WTC11 (cell line): ENCODE measurements at regions of chr17 and their contacts with region 1.

Region 1: DNA sequence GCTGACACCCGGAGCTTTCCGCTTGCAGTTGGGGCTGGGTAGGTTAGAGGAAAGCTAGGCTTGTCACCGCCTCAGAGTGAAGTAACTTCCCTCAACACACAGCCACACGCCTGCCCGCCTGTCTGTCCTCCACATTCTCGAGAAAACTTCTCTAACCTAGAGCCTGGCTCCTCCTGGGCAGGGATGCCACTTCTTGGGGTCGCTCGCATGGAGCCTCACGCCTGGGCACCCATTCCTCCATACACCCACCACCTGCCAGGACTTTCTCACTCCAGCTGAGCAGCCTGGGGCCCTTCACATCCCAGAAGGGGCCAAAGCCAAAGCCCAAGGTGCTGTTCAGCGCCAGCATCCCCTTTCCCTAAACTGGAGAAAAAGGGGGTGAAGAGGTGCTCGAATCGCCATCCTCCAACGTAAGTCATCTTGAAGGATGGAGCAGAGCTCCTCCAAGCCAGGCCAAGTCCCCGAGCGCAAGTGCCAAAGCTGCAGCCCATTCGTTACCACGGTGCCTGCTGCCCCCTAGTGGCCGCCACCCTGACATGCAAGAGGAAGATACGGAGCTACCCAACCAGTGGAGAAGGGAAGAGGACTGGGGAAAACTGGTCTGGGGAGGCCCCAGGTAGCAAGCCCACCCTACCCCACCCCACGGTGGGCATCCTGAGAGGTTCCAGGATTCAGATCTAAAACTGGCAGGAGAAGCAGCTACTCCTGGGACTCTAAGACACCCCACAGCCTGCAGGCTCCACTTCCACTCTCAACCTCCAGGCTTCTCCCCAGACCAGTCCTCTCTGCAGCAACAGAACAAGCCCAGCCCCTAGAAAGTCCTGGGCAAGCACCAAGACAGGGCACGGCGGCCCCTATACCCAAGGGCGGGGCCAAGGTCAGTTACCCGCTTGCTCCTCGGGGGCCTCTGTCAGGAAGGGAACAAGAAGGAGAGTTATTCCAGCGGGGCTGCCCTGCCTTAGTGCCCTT is 63.1 kb downstream of the MYO18A start:
- DNase-seq: peak; percentile 93
- ATAC-seq: peak; percentile 72
- H3K4me3 Mint-ChIP-seq: no peak overlapping the region
- H3K27ac Mint-ChIP-seq: no peak overlapping the region
- H3K4me1 Mint-ChIP-seq: peaks cover 9% of the 10 kb centered on the region
- H3K27me3 Mint-ChIP-seq: no peaks in the 10 kb centered on the region
- CTCF ChIP-seq: peak; percentile 98

Region 2: GRCh38 chr17:28916302-28916934 is 200.7 kb before region 1 on chr17:
- CTCF ChIA-PET with region 1: interaction called, 15 read pairs
- POLR2A ChIA-PET with region 1: no interaction called
- DNase-seq: peak; percentile 53
- ATAC-seq: peak; percentile 88
- H3K4me3 Mint-ChIP-seq: no peak overlapping the region
- H3K27ac Mint-ChIP-seq: no peak overlapping the region
- H3K4me1 Mint-ChIP-seq: no peaks in the 10 kb centered on the region
- H3K27me3 Mint-ChIP-seq: no peaks in the 10 kb centered on the region
- CTCF ChIP-seq: peak; percentile 62

Region 3: GRCh38 chr17:28973425-28973824 is 143.7 kb before region 1 on chr17:
- CTCF ChIA-PET with region 1: interaction called, 78 read pairs
- POLR2A ChIA-PET with region 1: no interaction called
- DNase-seq: no peak
- ATAC-seq: no peak
- H3K4me3 Mint-ChIP-seq: no peak overlapping the region
- H3K27ac Mint-ChIP-seq: no peak overlapping the region
- H3K4me1 Mint-ChIP-seq: peaks cover 33% of the 10 kb centered on the region
- H3K27me3 Mint-ChIP-seq: peaks cover 3% of the 10 kb centered on the region; the same call in 1 of the 2 replicates
- CTCF ChIP-seq: no peak

Region 4: DNA sequence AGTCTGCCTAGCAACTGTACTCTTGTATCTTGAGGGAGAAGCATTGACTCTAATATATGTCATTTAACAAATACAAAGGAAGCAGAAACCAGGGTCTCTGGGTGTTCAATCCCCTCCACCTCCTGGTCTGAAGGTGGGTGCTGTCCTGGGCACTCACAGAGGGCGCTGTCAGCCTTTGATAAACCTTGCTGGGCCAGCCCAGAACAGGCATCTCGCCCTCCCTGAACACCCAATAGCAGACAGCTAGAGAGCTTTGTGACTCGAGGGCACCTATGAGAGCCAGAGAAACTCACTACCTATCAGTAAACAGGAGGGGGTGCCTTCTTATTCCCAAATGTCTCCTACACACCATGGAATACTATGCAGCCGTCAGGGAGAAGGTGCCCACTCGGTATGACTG is 80.5 kb before region 1 on chr17:
- CTCF ChIA-PET with region 1: interaction called, 42 read pairs
- POLR2A ChIA-PET with region 1: interaction called, 3 read pairs
- DNase-seq: no peak
- ATAC-seq: 0 out of 2 replicates have a peak, but pooled peaks have one; percentile 6
- H3K4me3 Mint-ChIP-seq: no peak overlapping the region
- H3K27ac Mint-ChIP-seq: peak overlapping the region; percentile 64; the same call in 1 of the 2 replicates
- H3K4me1 Mint-ChIP-seq: peaks cover 38% of the 10 kb centered on the region
- H3K27me3 Mint-ChIP-seq: peaks cover 20% of the 10 kb centered on the region
- CTCF ChIP-seq: no peak

Region 5: DNA sequence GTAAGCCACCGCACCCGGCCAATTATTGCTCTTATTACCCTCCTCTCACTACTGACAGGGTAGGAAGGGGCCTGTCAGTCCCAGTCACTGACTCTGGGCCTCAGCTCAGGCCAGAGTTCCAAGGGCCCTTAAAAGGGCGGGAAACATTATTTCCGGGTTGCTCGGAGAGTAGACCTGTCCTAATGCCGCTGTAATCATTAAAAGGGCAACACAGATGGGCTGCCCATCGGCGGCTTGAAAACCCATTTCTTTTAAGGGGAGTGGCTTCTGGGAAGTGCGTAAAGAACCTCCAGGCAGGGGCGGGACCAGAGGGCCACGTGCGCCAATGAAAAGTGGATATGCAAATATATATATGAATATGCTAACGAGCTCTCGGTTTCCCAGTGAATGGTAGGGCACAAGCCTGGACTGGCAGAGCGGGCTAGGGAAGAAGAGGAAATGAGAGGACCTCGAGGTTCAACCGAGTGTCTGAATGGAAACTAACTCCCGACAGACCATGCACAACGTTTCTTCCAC is 47.5 kb before region 1 on chr17:
- CTCF ChIA-PET with region 1: interaction called, 53 read pairs
- POLR2A ChIA-PET with region 1: no interaction called
- DNase-seq: peak; percentile 61
- ATAC-seq: peak; percentile 56
- H3K4me3 Mint-ChIP-seq: no peak overlapping the region
- H3K27ac Mint-ChIP-seq: no peak overlapping the region
- H3K4me1 Mint-ChIP-seq: peaks cover 45% of the 10 kb centered on the region
- H3K27me3 Mint-ChIP-seq: peaks cover 12% of the 10 kb centered on the region
- CTCF ChIP-seq: no peak

Region 6: GRCh38 chr17:29133146-29133713 is 16.1 kb after region 1 on chr17:
- CTCF ChIA-PET with region 1: interaction called, 116 read pairs
- POLR2A ChIA-PET with region 1: no interaction called
- DNase-seq: no peak
- ATAC-seq: peak; percentile 83
- H3K4me3 Mint-ChIP-seq: no peak overlapping the region
- H3K27ac Mint-ChIP-seq: peak overlapping the region; percentile 30
- H3K4me1 Mint-ChIP-seq: peaks cover 27% of the 10 kb centered on the region
- H3K27me3 Mint-ChIP-seq: no peaks in the 10 kb centered on the region
- CTCF ChIP-seq: no peak

Region 7: DNA sequence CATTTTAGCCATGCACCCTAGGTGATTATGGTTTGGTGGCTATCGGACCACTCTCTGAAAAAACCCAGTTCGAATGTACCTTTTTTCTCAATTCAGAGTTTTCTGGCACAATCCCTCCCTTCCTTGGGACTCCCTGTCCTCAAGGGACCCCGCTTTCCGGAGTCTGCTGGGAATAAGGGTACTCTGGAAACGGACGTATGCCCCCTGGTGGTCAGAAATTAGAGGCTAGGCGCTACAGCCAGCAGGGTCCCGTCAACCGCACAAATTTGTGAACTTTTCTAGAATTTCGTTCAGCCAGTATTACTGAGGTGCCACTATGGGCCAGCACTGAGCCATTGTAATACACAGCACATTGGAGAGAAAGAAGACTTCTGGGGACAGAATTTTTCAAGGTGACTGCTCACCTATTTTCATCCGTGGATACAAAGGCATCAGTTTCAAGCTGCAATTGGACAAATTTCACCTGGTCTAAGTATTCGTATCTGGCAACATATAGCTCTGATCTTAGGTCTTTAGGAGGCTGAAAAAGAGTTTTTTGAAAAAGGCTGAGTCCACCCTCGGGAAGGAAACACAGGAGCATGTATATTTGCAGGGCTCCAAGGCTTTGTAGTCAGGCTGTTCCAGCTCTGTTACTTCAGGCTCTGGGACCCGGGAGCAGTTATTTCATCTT is 102.4 kb after region 1 on chr17:
- CTCF ChIA-PET with region 1: interaction called, 39 read pairs
- POLR2A ChIA-PET with region 1: no interaction called
- DNase-seq: peak; percentile 89
- ATAC-seq: peak; percentile 97
- H3K4me3 Mint-ChIP-seq: no peak overlapping the region
- H3K27ac Mint-ChIP-seq: no peak overlapping the region
- H3K4me1 Mint-ChIP-seq: peaks cover 6% of the 10 kb centered on the region
- H3K27me3 Mint-ChIP-seq: no peaks in the 10 kb centered on the region
- CTCF ChIP-seq: peak; percentile 82